ENCODE measurements at regions of chr6 and their contacts with region 1.

Region 1: GRCh38 chr6:148166339-148166968 is 176.2 kb upstream of the SASH1 start:
- DNase-seq: peak; percentile 59
- ATAC-seq: peak; percentile 67
- H3K4me3 ChIP-seq: no peak overlapping the region
- H3K27ac ChIP-seq: no peak overlapping the region
- H3K4me1 ChIP-seq: no peaks in the 10 kb centered on the region
- H3K27me3 ChIP-seq: no peaks in the 10 kb centered on the region
- CTCF ChIP-seq: peak; percentile 71
- EP300 ChIP-seq: no peak
- POLR2A ChIP-seq: no peak
- RAD21 ChIP-seq: peak; percentile 54; the same call in 1 of the 2 replicates

Region 2: DNA sequence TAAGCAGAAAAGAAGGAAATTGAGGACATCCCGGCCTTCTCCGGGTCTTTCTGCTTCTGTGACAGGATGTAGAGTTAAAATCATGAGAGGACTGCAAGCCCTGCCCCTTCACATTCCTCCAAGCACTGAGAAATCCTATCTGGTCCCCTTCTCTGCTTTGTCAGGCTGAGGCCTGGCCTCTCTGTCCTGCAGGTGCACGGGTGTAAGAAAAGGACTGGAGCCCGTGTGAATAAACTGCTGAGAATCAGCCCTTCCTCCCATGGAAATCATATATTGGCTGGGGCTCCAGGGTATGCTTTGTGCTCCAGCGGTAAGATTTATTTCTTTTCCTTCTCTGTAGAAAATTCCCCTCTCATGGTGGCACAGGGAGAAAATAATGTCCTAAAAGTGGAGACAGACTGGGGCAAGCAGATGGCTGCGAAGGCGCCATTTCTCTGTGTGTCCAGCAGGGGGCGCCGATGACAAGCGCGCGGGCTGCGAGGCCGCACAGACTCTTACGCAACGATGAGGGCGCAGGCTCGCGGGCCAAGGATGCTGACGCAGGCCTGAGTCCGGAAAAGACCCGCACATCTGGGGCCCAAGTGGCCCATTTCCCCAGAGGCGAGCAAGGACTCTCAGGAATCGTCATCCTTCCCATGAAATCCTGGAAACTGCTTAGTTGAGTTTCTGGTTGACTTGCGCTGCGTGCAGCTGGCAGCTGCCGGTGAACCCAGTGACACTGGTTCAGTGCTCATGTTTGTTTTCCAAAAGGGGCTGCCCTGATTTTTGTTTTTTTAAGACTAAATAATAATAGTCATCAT is 1309.1 kb before region 1 on chr6:
- CTCF ChIA-PET with region 1: no interaction called
- POLR2A ChIA-PET with region 1: no interaction called
- in situ Hi-C with region 1: loop called (anchors 25 kb)
- intact Hi-C with region 1: loop called (anchors 2 kb)
- DNase-seq: peak; percentile 63
- ATAC-seq: peak; percentile 99
- H3K4me3 ChIP-seq: peak overlapping the region in 1 of 3 experiments; percentile 42; a peak in 1 of 6 replicates
- H3K27ac ChIP-seq: no peak overlapping the region
- H3K4me1 ChIP-seq: 0 out of 2 replicates have a peak, but pooled peaks cover 4% of the 10 kb centered on the region
- H3K27me3 ChIP-seq: no peaks in the 10 kb centered on the region; a peak in 2 of 5 replicates
- CTCF ChIP-seq: peak; percentile 99
- EP300 ChIP-seq: peak in 1 of 2 experiments; percentile 39; a peak in 1 of 4 replicates
- POLR2A ChIP-seq: no peak
- RAD21 ChIP-seq: peak; percentile 98

Region 3: DNA sequence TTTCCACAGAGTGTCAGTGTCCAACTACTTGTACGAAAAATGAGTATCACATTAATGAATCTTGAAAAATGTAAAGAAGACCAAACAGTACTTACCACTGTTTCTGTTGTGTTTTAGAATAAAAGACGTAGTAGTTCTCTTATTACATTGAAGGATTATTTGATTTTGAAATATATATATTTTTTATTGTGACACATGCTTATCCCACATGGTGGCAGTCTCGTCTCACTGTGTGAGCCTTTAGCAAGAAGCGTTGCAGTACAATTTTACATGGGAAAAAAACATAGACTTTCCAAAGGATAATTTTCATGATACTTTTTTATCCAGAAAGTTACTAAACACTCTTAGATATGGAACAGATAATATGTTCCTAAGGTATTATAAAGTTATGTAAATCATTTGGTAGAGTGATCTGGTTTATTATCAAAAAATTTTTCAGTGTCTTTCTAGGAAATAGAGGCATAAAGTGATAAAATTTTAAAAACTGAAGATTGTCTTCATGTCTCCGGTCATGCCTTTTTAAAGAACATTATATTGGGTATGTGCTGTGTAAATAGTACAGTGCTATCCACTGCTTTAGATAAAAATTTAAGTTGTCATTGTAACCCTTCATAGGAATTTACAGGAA is 775.4 kb before region 1 on chr6:
- CTCF ChIA-PET with region 1: no interaction called
- POLR2A ChIA-PET with region 1: no interaction called
- in situ Hi-C with region 1: loop called (anchors 25 kb)
- intact Hi-C with region 1: loop called (anchors 1 kb)
- DNase-seq: peak; percentile 27
- ATAC-seq: 0 out of 3 replicates have a peak, but pooled peaks have one; percentile 31
- H3K4me3 ChIP-seq: no peak overlapping the region; a peak in 1 of 6 replicates
- H3K27ac ChIP-seq: no peak overlapping the region
- H3K4me1 ChIP-seq: peaks cover 8% of the 10 kb centered on the region
- H3K27me3 ChIP-seq: 0 out of 5 replicates have a peak, but pooled peaks cover 0 to under 1% of the 10 kb centered on the region in 2 experiments
- CTCF ChIP-seq: peak; percentile 47
- EP300 ChIP-seq: no peak
- POLR2A ChIP-seq: no peak
- RAD21 ChIP-seq: no peak

Region 4: DNA sequence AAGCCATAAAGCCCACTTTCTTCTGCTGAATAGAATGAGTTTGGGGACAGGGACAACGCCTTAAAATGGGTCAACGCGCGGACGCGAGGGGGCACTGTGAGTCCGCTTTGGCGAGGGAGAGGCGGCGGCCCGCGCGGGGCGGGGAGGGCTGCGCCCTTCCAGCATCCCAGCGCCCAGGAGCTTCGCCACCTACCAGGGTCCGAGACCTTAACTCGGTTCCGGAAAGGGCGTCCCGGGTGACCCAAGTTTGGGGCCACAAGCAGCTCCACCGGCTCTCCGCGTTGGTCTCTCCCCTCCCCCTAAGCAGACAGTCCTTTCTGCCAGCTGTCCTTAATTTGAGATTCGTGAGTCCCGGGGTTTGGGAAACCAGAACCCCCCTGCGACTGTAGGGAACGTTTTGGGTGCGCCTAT is 659.7 kb before region 1 on chr6:
- CTCF ChIA-PET with region 1: interaction called, 24 read pairs
- POLR2A ChIA-PET with region 1: no interaction called
- in situ Hi-C with region 1: loop called (anchors 5 kb)
- intact Hi-C with region 1: loop called (anchors 1 kb)
- DNase-seq: peak; percentile 38
- ATAC-seq: peak; percentile 80
- H3K4me3 ChIP-seq: peak overlapping the region in 1 of 3 experiments; percentile 69; a peak in 1 of 6 replicates
- H3K27ac ChIP-seq: no peak overlapping the region
- H3K4me1 ChIP-seq: peaks cover 37% of the 10 kb centered on the region
- H3K27me3 ChIP-seq: peaks cover 10 to 46% of the 10 kb centered on the region in 2 experiments
- CTCF ChIP-seq: peak; percentile 95
- EP300 ChIP-seq: no peak
- POLR2A ChIP-seq: no peak
- RAD21 ChIP-seq: peak; percentile 92

Region 5: GRCh38 chr6:148144917-148145521 is 21.4 kb before region 1 on chr6:
- CTCF ChIA-PET with region 1: interaction called, 5 read pairs
- POLR2A ChIA-PET with region 1: no interaction called
- in situ Hi-C with region 1: no loop called
- intact Hi-C with region 1: loop called (anchors 1 kb)
- DNase-seq: peak; percentile 64
- ATAC-seq: peak; percentile 84
- H3K4me3 ChIP-seq: peak overlapping the region in 1 of 3 experiments; percentile 41; a peak in 1 of 6 replicates
- H3K27ac ChIP-seq: no peak overlapping the region
- H3K4me1 ChIP-seq: peaks cover 8% of the 10 kb centered on the region; the same call in 1 of the 2 replicates
- H3K27me3 ChIP-seq: no peaks in the 10 kb centered on the region
- CTCF ChIP-seq: peak; percentile 80
- EP300 ChIP-seq: no peak
- POLR2A ChIP-seq: no peak
- RAD21 ChIP-seq: peak; percentile 38; the same call in 1 of the 2 replicates